Activated CD8-positive, alpha-beta T cell treated with anti-CD3 and anti-CD28 coated beads for 36 hours (primary cell): ENCODE measurements at regions of chr17 and their contacts with region 1.

Region 1: GRCh38 chr17:82022981-82023374 is at the start of gene LRRC45:
- DNase-seq: peak; percentile 100
- ATAC-seq: peak; percentile 96
- H3K4me3 Mint-ChIP-seq: peak within 1 kb of the TSS; percentile 89
- H3K27ac Mint-ChIP-seq: peak within 1 kb of the TSS; percentile 34
- H3K4me1 Mint-ChIP-seq: peaks cover 12% of the 10 kb centered on the region
- H3K27me3 Mint-ChIP-seq: no peaks in the 10 kb centered on the region
- CTCF ChIP-seq: no peak
- total RNA-seq, gene LRRC45: 12.9 TPM

Region 2: GRCh38 chr17:81927653-81928543 is 95.1 kb before region 1 on chr17 and contains the start of gene MAFG:
- CTCF ChIA-PET with region 1: interaction called, 23 read pairs
- POLR2A ChIA-PET with region 1: no interaction called
- intact Hi-C with region 1: no loop called
- DNase-seq: peak; percentile 93
- ATAC-seq: peak; percentile 74
- H3K4me3 Mint-ChIP-seq: peak within 1 kb of the TSS; percentile 80
- H3K27ac Mint-ChIP-seq: peak within 1 kb of the TSS; percentile 79
- H3K4me1 Mint-ChIP-seq: peaks cover 34% of the 10 kb centered on the region
- H3K27me3 Mint-ChIP-seq: peaks cover 5% of the 10 kb centered on the region
- CTCF ChIP-seq: peak; percentile 65
- total RNA-seq, gene MAFG: 12.4 to 14.1 TPM

Region 3: DNA sequence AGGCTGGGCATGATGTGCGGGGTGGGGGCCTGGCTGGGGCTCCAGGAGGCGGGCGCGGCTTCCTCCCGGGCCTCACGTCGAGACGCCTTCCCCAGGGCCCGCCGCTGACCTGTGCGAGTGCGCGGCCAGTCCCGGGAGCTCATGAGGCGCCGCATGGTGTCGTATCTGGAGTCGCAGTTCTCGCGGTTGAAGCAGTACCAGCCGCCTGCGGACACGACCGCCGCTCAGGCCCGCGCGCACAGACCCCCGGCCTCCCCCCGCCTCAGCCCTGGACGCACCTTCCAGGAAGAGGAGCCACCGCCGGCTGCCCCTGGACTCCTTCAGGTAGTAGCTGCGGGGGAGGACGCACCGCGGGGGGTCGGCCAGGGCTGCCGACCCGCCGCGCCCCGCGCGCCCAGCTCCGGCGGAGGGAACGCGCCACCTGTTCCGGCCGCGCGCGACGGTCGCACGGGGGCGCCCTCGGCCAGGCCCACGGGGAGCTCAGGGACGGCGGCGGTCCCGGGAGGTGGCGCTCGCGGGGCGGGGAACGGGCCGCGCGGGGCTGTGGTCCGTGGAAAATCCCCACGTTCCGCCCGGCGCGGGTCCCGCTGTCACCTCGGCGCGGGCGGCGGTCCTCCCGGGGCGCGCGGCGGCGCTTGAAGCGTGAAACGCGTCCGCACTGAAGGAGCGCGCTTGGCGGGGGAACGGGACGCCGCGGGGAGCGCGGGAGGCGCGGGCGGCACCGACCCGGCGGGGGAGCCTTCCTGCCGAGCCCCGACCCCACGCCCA is 63.4 kb before region 1 on chr17:
- CTCF ChIA-PET with region 1: interaction called, 121 read pairs
- POLR2A ChIA-PET with region 1: interaction called, 9 read pairs
- intact Hi-C with region 1: loop called (anchors 5 kb)
- DNase-seq: peak; percentile 76
- ATAC-seq: peak; percentile 86
- H3K4me3 Mint-ChIP-seq: peak overlapping the region; percentile 42
- H3K27ac Mint-ChIP-seq: no peak overlapping the region
- H3K4me1 Mint-ChIP-seq: peaks cover 4% of the 10 kb centered on the region
- H3K27me3 Mint-ChIP-seq: peaks cover 21% of the 10 kb centered on the region
- CTCF ChIP-seq: peak; percentile 91

Region 4: GRCh38 chr17:81977211-81978027 is 45.6 kb before region 1 on chr17 and contains the start of gene ASPSCR1:
- CTCF ChIA-PET with region 1: interaction called, 13 read pairs
- POLR2A ChIA-PET with region 1: interaction called, 4 read pairs
- intact Hi-C with region 1: no loop called
- DNase-seq: peak; percentile 92
- ATAC-seq: peak; percentile 90
- H3K4me3 Mint-ChIP-seq: peak within 1 kb of the TSS; percentile 96
- H3K27ac Mint-ChIP-seq: peak within 1 kb of the TSS; percentile 99
- H3K4me1 Mint-ChIP-seq: peaks cover 19% of the 10 kb centered on the region
- H3K27me3 Mint-ChIP-seq: no peaks in the 10 kb centered on the region
- CTCF ChIP-seq: no peak
- total RNA-seq, gene ASPSCR1: 18.7 to 24.5 TPM

Region 5: GRCh38 chr17:82037113-82037888 is 14.3 kb after region 1 on chr17 and contains the start of gene DCXR:
- CTCF ChIA-PET with region 1: interaction called, 40 read pairs
- POLR2A ChIA-PET with region 1: interaction called, 6 read pairs
- intact Hi-C with region 1: no loop called
- DNase-seq: peak; percentile 98
- ATAC-seq: peak; percentile 95
- H3K4me3 Mint-ChIP-seq: peak within 1 kb of the TSS; percentile 68
- H3K27ac Mint-ChIP-seq: peak within 1 kb of the TSS; percentile 76
- H3K4me1 Mint-ChIP-seq: peaks cover 15% of the 10 kb centered on the region
- H3K27me3 Mint-ChIP-seq: no peaks in the 10 kb centered on the region
- CTCF ChIP-seq: peak; percentile 80
- total RNA-seq, gene DCXR: 99.2 to 101 TPM

Region 6: DNA sequence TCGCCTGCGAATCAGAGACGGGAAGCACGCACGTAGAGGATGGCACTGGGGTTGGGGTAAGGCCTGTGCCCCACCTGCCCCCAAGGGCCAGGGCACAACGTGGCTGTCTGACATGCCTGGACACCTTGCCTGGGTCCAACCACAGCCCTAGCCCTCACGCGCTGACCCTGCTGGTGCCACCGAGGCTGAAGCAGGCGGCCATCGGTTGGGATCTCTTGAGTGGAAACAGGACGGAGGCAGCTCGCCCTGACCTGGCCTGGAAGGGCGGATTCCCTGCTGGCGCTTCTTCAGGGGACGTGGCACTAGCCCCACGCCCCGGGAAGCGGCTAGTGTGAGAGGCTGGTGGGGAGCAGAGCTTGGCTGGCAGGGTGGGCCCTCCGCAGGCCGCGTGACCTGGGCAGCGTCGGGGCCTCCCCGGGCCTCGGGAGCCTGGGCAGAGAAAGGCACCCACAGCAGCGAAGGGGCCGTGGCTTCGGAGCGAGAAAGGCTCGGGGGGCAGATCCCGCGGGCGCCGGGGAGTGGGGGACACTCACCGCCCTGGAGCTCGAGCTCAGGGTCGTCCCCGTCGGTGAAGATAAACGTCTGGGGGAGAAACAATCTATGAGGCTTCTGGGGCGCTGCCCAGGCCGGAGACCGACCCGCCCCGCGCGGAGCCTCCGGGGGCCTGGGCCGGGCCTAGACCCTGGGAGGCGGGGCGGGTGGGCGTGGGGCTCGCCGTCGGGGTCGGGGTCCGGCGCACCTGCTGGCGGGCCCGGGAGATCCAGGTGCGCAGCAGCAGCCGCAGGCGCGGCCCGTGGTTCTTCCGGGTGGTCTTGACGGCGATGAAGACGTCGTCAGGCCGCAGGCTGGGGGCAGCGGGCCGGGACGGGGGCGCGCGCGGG is 28.0 kb after region 1 on chr17:
- CTCF ChIA-PET with region 1: no interaction called
- POLR2A ChIA-PET with region 1: no interaction called
- intact Hi-C with region 1: no loop called
- DNase-seq: no peak
- ATAC-seq: peak; percentile 17
- H3K4me3 Mint-ChIP-seq: peak overlapping the region; percentile 81
- H3K27ac Mint-ChIP-seq: peak overlapping the region; percentile 75
- H3K4me1 Mint-ChIP-seq: peaks cover 22% of the 10 kb centered on the region
- H3K27me3 Mint-ChIP-seq: no peaks in the 10 kb centered on the region
- CTCF ChIP-seq: no peak